Tibial artery (tissue), 4 donors: ENCODE measurements at regions of chr16 and their contacts with region 1.

Region 1: DNA sequence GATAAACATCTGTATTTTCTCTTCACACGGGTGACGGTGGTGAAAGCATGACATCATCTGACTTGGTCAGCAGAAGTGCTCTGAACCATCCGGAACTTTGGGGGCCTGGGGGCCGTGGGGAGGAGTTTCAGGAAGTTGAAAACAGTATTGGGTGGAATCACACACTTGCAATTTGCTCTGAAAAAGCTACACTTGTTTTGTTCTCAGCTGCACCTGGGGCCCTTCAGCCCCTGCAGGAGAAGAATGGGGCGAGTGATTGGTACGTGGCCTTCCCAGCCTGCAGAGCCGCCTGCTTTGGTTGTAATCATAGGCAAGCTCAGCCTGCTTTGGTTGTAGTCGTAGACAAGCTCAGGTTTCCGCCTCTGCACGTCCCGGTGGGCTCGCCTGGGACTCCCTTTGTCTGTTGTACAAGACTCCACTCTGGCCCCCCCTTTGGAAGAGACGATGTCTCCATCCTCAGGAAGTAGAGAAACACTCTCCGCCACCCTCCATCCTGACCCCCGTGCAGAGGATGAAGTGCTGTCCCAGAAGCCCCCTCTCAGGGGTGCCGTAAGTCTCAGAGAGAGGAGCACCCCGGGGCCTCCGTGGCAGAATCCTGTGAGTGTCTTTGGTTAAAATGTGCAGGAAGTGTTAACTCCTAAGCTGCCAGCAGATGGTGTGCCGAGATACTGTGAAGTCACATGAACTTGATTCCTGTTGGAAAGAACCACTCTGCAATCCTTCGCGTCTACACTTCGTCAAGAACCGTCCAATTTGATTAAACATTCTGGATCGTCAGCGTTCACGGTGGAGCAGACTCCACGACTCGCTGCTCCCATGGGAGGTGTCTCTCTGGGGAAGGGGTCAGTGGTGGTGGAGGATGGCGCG is 5.4 kb downstream of the BANP start:
- DNase-seq: peak; percentile 48 to 68
- H3K4me3 ChIP-seq: peak overlapping the region in 1 of 2 donors; percentile 13
- H3K27ac ChIP-seq: no peak overlapping the region
- H3K4me1 ChIP-seq: peaks cover 0 to 47% (median 24%) of the 10 kb centered on the region in 4 donors
- H3K27me3 ChIP-seq: no peaks in the 10 kb centered on the region
- CTCF ChIP-seq: no peak

Region 2: GRCh38 chr16:88569985-88570690 is 613.5 kb after region 1 on chr16 and contains the start of gene ZC3H18:
- intact Hi-C with region 1: loop called (anchors 5 kb)
- DNase-seq: peak; percentile 92 to 98
- H3K4me3 ChIP-seq: peak within 1 kb of the TSS; percentile 74 to 91
- H3K27ac ChIP-seq: peak within 1 kb of the TSS; percentile 69 to 81
- H3K4me1 ChIP-seq: peaks cover 0 to 30% (median 23%) of the 10 kb centered on the region in 4 donors
- H3K27me3 ChIP-seq: no peaks in the 10 kb centered on the region
- CTCF ChIP-seq: no peak